A549 (cell line): ENCODE measurements at regions of chr2 and their contacts with region 1.

Region 1: GRCh38 chr2:38274286-38275276 is 102.5 kb downstream of the ATL2 start:
- DNase-seq: peak; percentile 76 to 87
- ATAC-seq: peak; percentile 86 to 90
- H3K4me3 ChIP-seq: no peak overlapping the region
- H3K27ac ChIP-seq: peak overlapping the region; percentile 29 to 42; a peak in 4 of 6 replicates
- H3K4me1 ChIP-seq: peaks cover 26% of the 10 kb centered on the region
- CTCF ChIP-seq: peak; percentile 95
- EP300 ChIP-seq: no peak
- POLR2A ChIP-seq: no peak
- RAD21 ChIP-seq: peak; percentile 96 to 98

Region 2: DNA sequence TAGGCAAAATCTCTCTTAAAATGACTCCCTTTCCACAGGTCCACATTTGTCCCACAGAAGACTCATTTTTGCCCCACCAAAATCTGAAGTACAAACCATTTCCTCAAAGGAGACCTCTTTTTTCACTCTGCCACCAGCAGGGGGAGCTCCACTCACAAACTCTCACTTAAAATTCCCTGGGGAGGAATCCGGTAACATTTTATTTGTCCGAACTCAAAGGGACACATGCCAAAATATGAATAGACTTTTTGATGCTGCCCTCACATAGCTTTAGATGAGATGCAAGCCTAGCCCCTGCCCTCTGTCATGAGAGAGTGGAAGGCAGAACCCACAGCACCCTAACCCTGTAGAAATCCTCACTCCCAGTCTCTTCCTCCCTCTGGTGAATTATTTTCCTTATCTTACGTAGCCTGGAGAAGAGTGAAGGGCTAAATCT is 292.4 kb before region 1 on chr2:
- CTCF ChIA-PET with region 1: interaction called, 27 read pairs
- POLR2A ChIA-PET with region 1: interaction called, 13 read pairs
- DNase-seq: peak in 1 of 2 experiments; percentile 64
- ATAC-seq: peak; percentile 82 to 85
- H3K4me3 ChIP-seq: peak overlapping the region; percentile 29; the same call in 1 of the 3 replicates
- H3K27ac ChIP-seq: 0 out of 6 replicates have a peak overlapping the region, but pooled peaks have one; percentile 21 to 22
- H3K4me1 ChIP-seq: peaks cover 4% of the 10 kb centered on the region; the same call in 1 of the 3 replicates
- CTCF ChIP-seq: peak; percentile 99
- EP300 ChIP-seq: no peak
- POLR2A ChIP-seq: no peak
- RAD21 ChIP-seq: peak; percentile 81 to 89

Region 3: DNA sequence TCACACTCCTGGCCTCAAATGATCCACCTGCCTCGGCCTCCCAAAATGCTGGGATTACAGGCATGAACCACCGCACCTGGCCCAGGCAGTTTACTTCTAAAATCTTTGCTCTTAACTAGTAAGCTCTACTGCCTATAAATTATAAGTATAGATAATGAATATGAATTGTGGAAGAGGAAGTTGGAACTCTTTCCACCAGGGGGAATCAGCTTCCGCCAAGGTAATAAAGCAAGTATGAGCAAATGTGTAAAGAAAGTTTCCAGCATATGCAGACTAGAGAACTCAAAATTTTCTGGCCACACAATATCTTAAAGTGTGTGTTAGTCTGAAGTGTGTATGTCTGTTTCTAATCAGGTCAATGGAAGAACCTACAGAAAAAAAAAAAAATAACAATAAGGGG is 281.4 kb before region 1 on chr2:
- CTCF ChIA-PET with region 1: interaction called, 15 read pairs
- POLR2A ChIA-PET with region 1: no interaction called
- DNase-seq: peak in 1 of 2 experiments; percentile 22
- ATAC-seq: no peak
- H3K4me3 ChIP-seq: no peak overlapping the region
- H3K27ac ChIP-seq: no peak overlapping the region
- H3K4me1 ChIP-seq: 0 out of 3 replicates have a peak, but pooled peaks cover 5% of the 10 kb centered on the region
- CTCF ChIP-seq: no peak
- EP300 ChIP-seq: no peak
- POLR2A ChIP-seq: no peak
- RAD21 ChIP-seq: peak in 1 of 2 experiments; percentile 19; a peak in 1 of 5 replicates

Region 4: DNA sequence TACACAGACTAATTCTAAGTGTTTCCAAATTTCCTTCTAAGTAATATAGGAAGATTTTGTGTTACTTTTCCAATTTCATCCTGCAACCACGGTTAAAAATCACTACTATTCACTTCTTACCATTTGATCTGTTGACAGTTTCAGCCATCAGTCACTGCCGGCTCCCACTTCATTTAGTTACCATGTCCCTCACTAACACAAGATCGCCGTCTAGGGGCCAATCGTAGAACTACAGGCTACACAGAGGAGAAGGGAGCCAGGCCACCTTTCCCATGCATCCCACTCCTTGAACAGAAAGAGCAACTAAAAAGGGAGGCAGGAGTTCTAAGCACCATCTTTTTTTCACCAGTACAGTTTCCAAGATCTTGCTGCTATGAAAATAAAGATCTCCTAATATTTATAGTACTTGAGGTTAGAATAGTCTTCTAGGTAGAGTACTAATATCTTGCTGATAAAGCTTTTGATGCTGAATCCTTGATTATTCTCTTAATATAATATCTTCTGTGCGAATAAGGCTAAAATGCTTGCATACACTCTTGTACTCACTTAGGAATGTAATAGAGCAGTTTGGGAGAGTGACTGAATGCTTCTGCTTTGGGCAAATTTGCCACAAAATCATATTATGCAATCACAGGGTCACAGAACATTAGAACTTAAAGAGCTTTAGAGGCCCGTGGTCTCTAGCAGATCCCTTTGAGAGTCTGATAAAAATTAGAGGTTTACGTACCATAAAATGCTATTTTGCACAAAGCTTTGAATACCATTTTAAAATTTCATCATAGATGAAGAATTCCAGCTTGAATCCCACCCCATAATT is 159.2 kb before region 1 on chr2:
- CTCF ChIA-PET with region 1: interaction called, 12 read pairs
- POLR2A ChIA-PET with region 1: interaction called, 6 read pairs
- DNase-seq: peak; percentile 82 to 88
- ATAC-seq: peak; percentile 92 to 98
- H3K4me3 ChIP-seq: no peak overlapping the region
- H3K27ac ChIP-seq: no peak overlapping the region
- H3K4me1 ChIP-seq: peaks cover 10% of the 10 kb centered on the region
- CTCF ChIP-seq: peak; percentile 98
- EP300 ChIP-seq: no peak
- POLR2A ChIP-seq: no peak
- RAD21 ChIP-seq: peak; percentile 89 to 97

Region 5: DNA sequence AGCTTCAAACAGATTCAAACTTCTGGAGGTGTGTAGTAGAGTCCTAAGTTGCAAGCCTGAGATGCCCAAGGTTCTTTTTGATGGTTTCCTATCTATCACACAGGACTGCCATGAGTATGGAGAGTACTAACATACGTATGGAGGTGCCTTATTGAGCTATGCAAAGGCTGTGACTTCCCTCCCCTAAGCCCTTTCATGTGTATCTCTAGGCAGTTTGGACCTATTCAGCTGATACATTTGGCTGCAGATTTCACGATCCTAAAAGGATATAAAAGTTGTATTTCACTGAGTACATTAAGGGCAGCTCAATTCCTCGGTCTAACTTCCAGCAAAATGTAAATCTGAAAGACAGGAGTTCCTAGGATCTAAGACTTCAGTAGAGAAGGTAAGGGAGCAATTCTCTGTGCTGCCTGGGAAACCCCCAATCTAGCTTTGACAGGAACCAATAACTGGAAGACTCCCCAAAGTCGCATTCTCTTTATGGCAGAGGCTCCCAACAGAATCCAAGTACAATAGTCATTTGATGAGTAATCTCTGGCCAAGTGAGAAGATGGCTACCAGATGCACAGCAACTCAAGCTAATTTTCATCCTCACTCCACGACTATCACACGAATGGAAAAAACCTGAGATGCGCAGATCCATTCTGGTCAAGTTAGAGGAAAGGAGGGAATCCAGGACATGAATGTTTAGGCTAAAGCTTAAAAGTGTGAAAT is 18.7 kb after region 1 on chr2:
- CTCF ChIA-PET with region 1: interaction called, 11 read pairs
- POLR2A ChIA-PET with region 1: interaction called, 8 read pairs
- DNase-seq: no peak
- ATAC-seq: peak in 1 of 2 experiments; percentile 27; a peak in 3 of 6 replicates
- H3K4me3 ChIP-seq: no peak overlapping the region
- H3K27ac ChIP-seq: no peak overlapping the region
- H3K4me1 ChIP-seq: no peaks in the 10 kb centered on the region
- CTCF ChIP-seq: no peak
- EP300 ChIP-seq: no peak
- POLR2A ChIP-seq: no peak
- RAD21 ChIP-seq: no peak

Region 6: DNA sequence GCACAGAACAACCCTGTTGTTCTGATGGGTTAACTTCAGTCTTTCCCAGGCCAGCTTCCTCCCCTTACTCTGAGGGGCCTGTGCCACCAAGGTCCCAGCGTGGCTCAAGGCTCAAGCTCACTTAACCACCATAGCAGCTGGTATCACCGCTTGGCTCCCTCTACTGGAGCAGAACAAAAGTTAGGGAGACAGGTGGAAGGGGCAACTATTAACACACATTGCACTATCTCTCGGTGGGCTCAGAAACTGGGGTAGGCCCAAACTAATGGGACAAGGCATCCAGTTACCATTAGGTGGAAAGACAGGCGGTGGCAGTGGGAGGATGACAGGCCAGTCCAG is 191.2 kb after region 1 on chr2:
- CTCF ChIA-PET with region 1: no interaction called
- POLR2A ChIA-PET with region 1: no interaction called
- DNase-seq: peak; percentile 63 to 66
- ATAC-seq: peak; percentile 77 to 89
- H3K4me3 ChIP-seq: no peak overlapping the region
- H3K27ac ChIP-seq: no peak overlapping the region
- H3K4me1 ChIP-seq: peaks cover 8% of the 10 kb centered on the region; the same call in 2 of the 3 replicates
- CTCF ChIP-seq: peak; percentile 61
- EP300 ChIP-seq: no peak
- POLR2A ChIP-seq: no peak
- RAD21 ChIP-seq: peak; percentile 64 to 68